BJ (cell line): ENCODE measurements at regions of chr17 and their contacts with region 1.

Region 1: DNA sequence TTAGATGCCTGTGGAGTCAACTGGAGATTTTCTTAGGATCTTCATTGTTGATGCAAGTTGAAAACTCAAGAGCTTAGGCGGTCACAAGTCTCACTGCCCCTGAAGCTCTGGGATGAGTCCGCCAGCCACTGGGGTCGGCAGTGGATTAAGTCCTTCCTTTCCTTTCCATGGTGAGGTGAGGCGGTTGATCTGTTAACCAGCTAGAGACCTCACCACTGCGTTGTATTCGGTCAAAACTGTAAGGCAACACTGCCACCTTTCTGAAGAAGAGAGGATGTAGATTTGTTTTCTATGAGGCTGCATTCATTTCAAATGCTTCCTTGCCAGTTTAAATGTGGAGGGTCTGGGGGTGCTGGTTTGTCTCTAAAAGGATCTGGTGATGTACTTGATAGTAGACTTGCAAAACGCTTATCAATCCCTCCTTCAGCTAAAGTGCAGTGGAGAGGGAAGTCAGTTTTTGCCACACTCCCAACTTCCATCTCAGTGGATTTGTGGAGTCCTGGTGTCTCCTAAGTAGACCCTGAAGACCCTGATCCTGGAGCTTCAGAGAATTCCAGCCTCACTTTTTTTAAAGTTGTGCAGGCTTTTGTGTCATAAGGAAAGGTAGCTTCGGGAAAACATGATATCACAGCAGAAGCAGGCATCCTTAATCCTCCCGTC is 1.7 kb downstream of the MYOCD start:
- DNase-seq: no peak
- H3K4me3 ChIP-seq: peak overlapping the region; percentile 17; the same call in 1 of the 2 replicates
- H3K27me3 ChIP-seq: no peaks in the 10 kb centered on the region
- CTCF ChIP-seq: peak; percentile 55

Region 2: DNA sequence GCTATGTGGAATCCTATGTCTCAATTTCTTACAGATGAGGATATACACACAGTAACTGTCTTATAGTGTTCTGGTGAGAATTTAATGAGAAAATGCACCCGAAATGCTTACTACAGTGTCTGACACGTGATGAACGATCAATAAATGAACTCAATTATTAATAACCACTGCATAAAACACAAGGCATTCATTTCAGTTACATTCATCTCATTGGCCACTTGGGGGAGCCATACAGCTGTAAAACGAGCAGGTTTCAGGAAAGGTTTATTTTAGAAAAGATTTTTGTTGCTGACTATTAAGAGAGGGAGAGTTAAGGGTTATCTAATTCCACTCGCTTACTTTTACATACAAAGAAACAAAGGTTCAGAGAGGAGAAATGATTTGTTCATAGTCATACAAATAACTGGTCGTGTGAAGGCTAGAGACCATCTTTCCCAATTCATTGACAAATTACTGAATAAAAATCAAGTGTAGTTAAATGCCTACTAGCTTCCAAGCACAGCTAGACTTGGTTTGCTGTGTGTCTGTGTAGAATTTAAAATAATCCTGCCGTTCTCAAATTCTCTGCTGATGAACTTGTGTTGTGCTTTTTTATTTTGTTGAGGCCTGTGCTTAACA is 486.7 kb before region 1 on chr17:
- CTCF ChIA-PET with region 1: interaction called, 25 read pairs
- POLR2A ChIA-PET with region 1: no interaction called
- DNase-seq: no peak
- H3K4me3 ChIP-seq: no peak overlapping the region
- H3K27me3 ChIP-seq: no peaks in the 10 kb centered on the region
- CTCF ChIP-seq: peak; percentile 69

Region 3: GRCh38 chr17:12256380-12256995 is 410.9 kb before region 1 on chr17:
- CTCF ChIA-PET with region 1: interaction called, 100 read pairs
- POLR2A ChIA-PET with region 1: no interaction called
- DNase-seq: peak; percentile 10
- H3K4me3 ChIP-seq: no peak overlapping the region
- H3K27me3 ChIP-seq: no peaks in the 10 kb centered on the region; the same call in 1 of the 2 replicates
- CTCF ChIP-seq: peak; percentile 69

Region 4: DNA sequence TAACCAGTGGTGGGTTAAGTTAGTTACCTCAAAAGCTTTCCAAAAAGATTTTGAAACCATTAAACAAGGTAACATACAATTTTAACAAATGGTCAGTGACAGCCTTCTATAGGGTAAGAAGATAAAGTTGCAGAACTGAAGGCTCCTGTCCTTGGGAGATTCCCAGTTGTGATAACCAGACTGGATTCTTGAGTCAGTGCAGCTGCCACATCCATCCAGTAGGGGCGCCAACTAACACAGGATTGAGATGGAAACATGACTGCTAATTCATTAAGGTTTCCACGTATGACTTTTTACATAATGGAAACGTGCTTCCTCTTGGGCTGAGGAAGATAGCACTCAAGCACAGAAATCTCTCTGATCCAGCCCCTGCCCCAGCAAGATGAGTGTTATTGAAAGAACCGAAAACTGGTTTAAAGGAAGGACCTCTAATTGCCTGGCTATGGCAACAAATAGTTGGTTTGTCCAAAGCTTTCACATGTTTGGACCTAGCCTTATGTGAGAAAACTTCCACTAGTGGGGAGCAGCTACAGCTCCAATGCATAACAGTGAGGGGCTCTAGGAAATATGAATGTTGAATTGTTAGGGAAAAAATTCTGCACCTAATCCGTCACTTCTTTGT is 271.6 kb before region 1 on chr17:
- CTCF ChIA-PET with region 1: no interaction called
- POLR2A ChIA-PET with region 1: no interaction called
- DNase-seq: no peak
- H3K4me3 ChIP-seq: no peak overlapping the region
- H3K27me3 ChIP-seq: no peaks in the 10 kb centered on the region
- CTCF ChIP-seq: peak; percentile 64

Region 5: GRCh38 chr17:12545877-12546513 is 121.4 kb before region 1 on chr17:
- CTCF ChIA-PET with region 1: interaction called, 90 read pairs
- POLR2A ChIA-PET with region 1: interaction called, 5 read pairs
- DNase-seq: no peak
- H3K4me3 ChIP-seq: no peak overlapping the region
- H3K27me3 ChIP-seq: no peaks in the 10 kb centered on the region
- CTCF ChIP-seq: peak; percentile 85

Region 6: DNA sequence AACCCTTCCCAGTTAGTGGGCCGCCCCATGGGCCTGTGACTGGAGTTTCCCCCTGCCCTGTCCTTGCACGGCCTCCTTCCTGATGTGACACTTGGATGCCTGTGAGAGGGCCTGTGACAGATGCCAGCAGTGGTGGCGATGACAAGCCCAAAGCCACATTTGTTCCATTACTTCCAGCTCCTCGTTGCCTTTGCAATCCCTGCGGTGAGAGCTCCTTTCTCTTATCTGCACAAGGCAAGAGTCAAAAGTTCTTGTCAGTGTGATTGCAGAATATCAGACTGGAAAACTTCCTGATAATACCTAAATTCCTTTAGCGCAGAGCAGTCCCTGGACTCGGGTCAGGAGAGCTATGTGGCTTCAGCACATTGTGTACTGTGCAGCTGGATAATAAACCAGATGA is 67.5 kb after region 1 on chr17:
- CTCF ChIA-PET with region 1: no interaction called
- POLR2A ChIA-PET with region 1: no interaction called
- DNase-seq: no peak
- H3K4me3 ChIP-seq: no peak overlapping the region
- H3K27me3 ChIP-seq: no peaks in the 10 kb centered on the region
- CTCF ChIP-seq: no peak

Region 7: DNA sequence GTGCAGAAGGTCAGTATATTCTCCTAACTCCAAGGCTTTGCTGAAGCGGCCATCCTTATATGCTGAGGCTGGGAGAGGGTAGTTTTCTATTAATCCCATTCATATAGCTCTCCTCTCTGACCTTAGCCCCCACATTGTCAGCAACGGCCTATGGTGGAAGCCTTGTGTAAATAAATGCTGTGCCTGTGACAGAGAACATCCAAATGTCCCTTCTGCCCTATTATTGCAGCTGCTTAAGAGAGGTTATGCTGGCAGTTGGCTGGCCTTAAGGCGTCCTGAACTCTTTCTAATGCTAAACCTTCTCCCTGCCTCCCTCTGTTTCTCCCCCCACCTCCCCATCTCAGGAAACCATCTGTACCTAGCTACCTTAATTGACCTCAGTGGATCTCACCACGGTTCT is 175.5 kb after region 1 on chr17:
- CTCF ChIA-PET with region 1: no interaction called
- POLR2A ChIA-PET with region 1: no interaction called
- DNase-seq: no peak
- H3K4me3 ChIP-seq: no peak overlapping the region
- H3K27me3 ChIP-seq: no peaks in the 10 kb centered on the region
- CTCF ChIP-seq: no peak